Naive thymus-derived CD4-positive, alpha-beta T cell (primary cell): ENCODE measurements at regions of chr15 and their contacts with region 1.

Region 1: DNA sequence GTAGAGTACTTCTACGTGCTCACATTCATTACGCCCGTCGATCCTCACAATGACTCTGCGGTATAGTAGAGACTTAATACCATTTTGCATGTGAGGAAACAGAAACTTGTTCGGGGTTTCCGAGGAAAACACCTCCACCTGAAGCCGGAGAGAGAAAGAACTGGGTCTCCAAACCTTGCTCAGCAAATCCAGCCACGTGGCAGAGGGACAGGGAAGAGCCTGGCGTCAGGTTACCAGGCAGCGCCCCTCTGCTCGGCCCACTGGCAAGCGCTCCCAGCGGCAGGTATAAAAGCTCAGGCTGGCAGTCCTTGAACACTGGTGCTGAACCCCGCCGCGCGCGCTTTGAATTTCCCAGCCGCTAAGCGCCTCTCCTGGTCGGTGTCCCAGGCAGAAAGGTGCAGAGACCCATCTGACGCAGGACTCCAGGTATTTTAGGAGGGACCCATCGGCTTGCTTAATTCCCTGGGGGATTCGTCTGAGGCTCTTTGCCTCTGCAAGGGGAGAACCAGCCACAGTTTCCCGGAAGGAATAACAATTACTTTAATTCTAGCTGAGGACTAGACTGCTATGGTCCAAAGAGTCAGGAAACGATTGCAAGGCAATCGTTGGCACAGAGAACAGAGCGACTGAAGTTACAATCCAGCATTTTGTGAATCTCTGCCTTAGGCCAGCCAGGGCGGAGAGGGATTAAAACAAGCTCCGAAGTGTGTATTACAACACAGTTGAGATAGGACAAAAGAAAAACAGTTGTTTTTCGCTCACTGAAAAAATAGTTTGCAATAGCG is at the start of gene C2CD4A:
- DNase-seq: peak; percentile 33 to 61 (median 52)
- ATAC-seq: peak; percentile 76
- H3K4me3 ChIP-seq: peak within 1 kb of the TSS; percentile 56
- H3K4me3 Mint-ChIP-seq: peak within 1 kb of the TSS; percentile 81 to 97 (median 92)
- H3K27ac ChIP-seq: no peak within 1 kb of the TSS
- H3K27ac Mint-ChIP-seq: peak within 1 kb of the TSS in 2 of 9 donors; percentile 5 to 20
- H3K4me1 ChIP-seq: peaks cover 13 to 17% of the 10 kb centered on the region in 2 donors
- H3K4me1 Mint-ChIP-seq: peaks cover 10 to 31% (median 23%) of the 10 kb centered on the region in 7 donors
- H3K27me3 ChIP-seq: peaks cover 5 to 13% of the 10 kb centered on the region in 2 donors
- H3K27me3 Mint-ChIP-seq: peaks cover 25 to 70% (median 28%) of the 10 kb centered on the region in 5 donors
- total RNA-seq, gene C2CD4A: not detected

Region 2: GRCh38 chr15:61871926-61872522 is 194.8 kb before region 1 on chr15:
- CTCF ChIA-PET with region 1: interaction called, 4 read pairs
- POLR2A ChIA-PET with region 1: interaction called, 3 read pairs
- intact Hi-C with region 1: loop called (anchors 1 kb)
- DNase-seq: peak in 2 of 9 donors; percentile 13 to 15
- ATAC-seq: peak; percentile 52
- H3K4me3 ChIP-seq: no peak overlapping the region
- H3K4me3 Mint-ChIP-seq: no peak overlapping the region
- H3K27ac ChIP-seq: no peak overlapping the region
- H3K27ac Mint-ChIP-seq: peak overlapping the region in 1 of 9 donors; percentile 42
- H3K4me1 ChIP-seq: no peaks in the 10 kb centered on the region
- H3K4me1 Mint-ChIP-seq: peaks cover 0 to 8% (median 0%) of the 10 kb centered on the region in 7 donors
- H3K27me3 ChIP-seq: no peaks in the 10 kb centered on the region
- H3K27me3 Mint-ChIP-seq: no peaks in the 10 kb centered on the region

Region 3: DNA sequence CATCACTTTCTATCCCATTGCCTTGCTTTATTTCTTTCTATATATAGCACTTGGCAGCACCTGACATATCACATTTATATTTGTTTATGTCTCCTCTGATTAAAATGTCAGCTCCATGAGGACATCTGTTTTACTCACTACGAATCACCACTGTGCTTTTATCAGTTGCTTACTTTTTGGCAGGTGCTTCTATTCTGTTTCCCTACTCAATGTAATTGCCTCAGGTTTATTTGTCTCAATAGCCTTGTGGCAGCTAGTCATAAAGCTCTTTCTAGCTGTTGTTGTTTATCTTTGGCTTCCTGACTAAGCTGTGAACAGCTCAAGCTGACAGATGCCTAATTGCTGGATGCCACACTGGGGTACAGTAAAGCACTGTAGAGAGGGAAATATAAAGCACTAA is 92.1 kb before region 1 on chr15:
- CTCF ChIA-PET with region 1: no interaction called
- POLR2A ChIA-PET with region 1: no interaction called
- intact Hi-C with region 1: loop called (anchors 5 to 10 kb)
- DNase-seq: no peak
- ATAC-seq: no peak
- H3K4me3 ChIP-seq: no peak overlapping the region
- H3K4me3 Mint-ChIP-seq: no peak overlapping the region
- H3K27ac ChIP-seq: no peak overlapping the region
- H3K27ac Mint-ChIP-seq: peak overlapping the region in 4 of 9 donors; percentile 19 to 78 (median 42)
- H3K4me1 ChIP-seq: peaks cover 0 to 6% of the 10 kb centered on the region in 2 donors
- H3K4me1 Mint-ChIP-seq: peaks cover 10 to 18% (median 14%) of the 10 kb centered on the region in 7 donors
- H3K27me3 ChIP-seq: no peaks in the 10 kb centered on the region
- H3K27me3 Mint-ChIP-seq: no peaks in the 10 kb centered on the region

Region 4: GRCh38 chr15:62035256-62035908 is 31.5 kb before region 1 on chr15:
- CTCF ChIA-PET with region 1: interaction called, 4 read pairs
- POLR2A ChIA-PET with region 1: no interaction called
- intact Hi-C with region 1: loop called in 1 of 2 experiments (anchors 5 kb)
- DNase-seq: no peak
- ATAC-seq: no peak
- H3K4me3 ChIP-seq: no peak overlapping the region
- H3K4me3 Mint-ChIP-seq: no peak overlapping the region
- H3K27ac ChIP-seq: no peak overlapping the region
- H3K27ac Mint-ChIP-seq: no peak overlapping the region
- H3K4me1 ChIP-seq: no peaks in the 10 kb centered on the region
- H3K4me1 Mint-ChIP-seq: peaks cover 6 to 22% (median 12%) of the 10 kb centered on the region in 7 donors
- H3K27me3 ChIP-seq: no peaks in the 10 kb centered on the region
- H3K27me3 Mint-ChIP-seq: no peaks in the 10 kb centered on the region